ENCODE measurements at regions of chr17 and their contacts with region 1.

Region 1: DNA sequence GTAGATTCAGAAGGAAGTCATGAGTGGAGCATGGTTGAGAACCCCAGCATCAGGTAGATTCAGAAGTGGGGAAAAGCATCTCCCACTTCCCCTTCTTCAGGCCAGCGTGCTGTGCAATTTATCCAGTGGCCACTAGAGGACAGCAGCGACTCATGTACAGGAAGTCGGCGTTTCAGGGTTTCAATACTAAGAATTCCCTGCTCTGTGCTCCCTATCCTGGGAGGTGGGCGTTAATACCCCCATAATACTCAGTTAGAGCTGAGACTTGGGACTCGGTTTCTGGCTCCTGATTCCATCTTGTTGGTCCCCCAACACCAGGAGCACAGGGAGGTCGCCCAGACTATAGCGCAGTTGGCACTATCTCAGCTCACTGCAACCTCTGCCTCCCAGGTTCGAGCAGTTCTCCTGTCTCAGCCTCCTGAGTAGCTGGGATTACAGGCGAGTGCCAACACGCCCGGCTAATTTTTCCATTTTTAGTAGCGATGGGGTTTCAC is 75.3 kb upstream of the AMZ2 start:
- DNase-seq: no peak
- H3K4me3 ChIP-seq: no peak overlapping the region
- H3K27me3 ChIP-seq: no peaks in the 10 kb centered on the region
- CTCF ChIP-seq: peak; percentile 94

Region 2: GRCh38 chr17:68184816-68185436 is 12.4 kb after region 1 on chr17:
- CTCF ChIA-PET with region 1: interaction called, 16 read pairs
- POLR2A ChIA-PET with region 1: no interaction called
- DNase-seq: no peak
- H3K4me3 ChIP-seq: no peak overlapping the region
- H3K27me3 ChIP-seq: no peaks in the 10 kb centered on the region
- CTCF ChIP-seq: no peak

Measured in BJ (cell line).